HepG2 (cell line): ENCODE measurements at regions of chr2 and their contacts with region 1.

Region 1: GRCh38 chr2:65396348-65397026 is 35.9 kb downstream of the SPRED2 start:
- DNase-seq: peak; percentile 90
- ATAC-seq: peak; percentile 94
- H3K4me3 ChIP-seq: peak overlapping the region in 2 of 3 experiments; percentile 23 to 25; a peak in 4 of 6 replicates
- H3K27ac ChIP-seq: peak overlapping the region; percentile 55
- H3K4me1 ChIP-seq: peaks cover 58% of the 10 kb centered on the region
- H3K27me3 ChIP-seq: no peaks in the 10 kb centered on the region
- CTCF ChIP-seq: no peak
- EP300 ChIP-seq: peak in 1 of 2 experiments; percentile 85; a peak in 2 of 4 replicates
- POLR2A ChIP-seq: no peak
- RAD21 ChIP-seq: no peak

Region 2: DNA sequence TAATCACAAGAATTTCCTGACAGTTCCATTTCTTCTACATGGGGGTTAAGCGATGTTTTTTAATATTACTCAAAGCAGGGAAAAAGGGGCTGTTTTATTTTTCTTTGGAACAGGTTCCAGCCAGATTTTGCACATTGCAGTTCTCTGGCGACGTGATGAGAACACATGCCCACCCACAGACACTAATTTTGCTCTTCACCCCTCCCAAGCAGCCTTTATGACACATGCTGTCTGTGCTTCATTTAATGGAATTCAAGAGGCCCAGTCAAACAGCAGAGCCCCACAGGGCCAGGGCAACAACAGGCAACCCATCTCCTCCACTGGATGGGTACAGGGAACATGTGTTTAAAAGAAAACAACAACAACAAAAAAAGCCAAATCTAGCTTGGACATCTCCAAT is 34.9 kb before region 1 on chr2:
- CTCF ChIA-PET with region 1: no interaction called
- POLR2A ChIA-PET with region 1: interaction called, 10 read pairs
- in situ Hi-C with region 1: no loop called
- intact Hi-C with region 1: no loop called
- DNase-seq: no peak
- ATAC-seq: no peak
- H3K4me3 ChIP-seq: no peak overlapping the region
- H3K27ac ChIP-seq: no peak overlapping the region
- H3K4me1 ChIP-seq: peaks cover 98% of the 10 kb centered on the region
- H3K27me3 ChIP-seq: no peaks in the 10 kb centered on the region
- CTCF ChIP-seq: no peak
- EP300 ChIP-seq: no peak
- POLR2A ChIP-seq: no peak
- RAD21 ChIP-seq: no peak